Activated B cell treated with CpG ODN at 0.5 μM for 24 hours (primary cell): ENCODE measurements at regions of chr12 and their contacts with region 1.

Region 1: DNA sequence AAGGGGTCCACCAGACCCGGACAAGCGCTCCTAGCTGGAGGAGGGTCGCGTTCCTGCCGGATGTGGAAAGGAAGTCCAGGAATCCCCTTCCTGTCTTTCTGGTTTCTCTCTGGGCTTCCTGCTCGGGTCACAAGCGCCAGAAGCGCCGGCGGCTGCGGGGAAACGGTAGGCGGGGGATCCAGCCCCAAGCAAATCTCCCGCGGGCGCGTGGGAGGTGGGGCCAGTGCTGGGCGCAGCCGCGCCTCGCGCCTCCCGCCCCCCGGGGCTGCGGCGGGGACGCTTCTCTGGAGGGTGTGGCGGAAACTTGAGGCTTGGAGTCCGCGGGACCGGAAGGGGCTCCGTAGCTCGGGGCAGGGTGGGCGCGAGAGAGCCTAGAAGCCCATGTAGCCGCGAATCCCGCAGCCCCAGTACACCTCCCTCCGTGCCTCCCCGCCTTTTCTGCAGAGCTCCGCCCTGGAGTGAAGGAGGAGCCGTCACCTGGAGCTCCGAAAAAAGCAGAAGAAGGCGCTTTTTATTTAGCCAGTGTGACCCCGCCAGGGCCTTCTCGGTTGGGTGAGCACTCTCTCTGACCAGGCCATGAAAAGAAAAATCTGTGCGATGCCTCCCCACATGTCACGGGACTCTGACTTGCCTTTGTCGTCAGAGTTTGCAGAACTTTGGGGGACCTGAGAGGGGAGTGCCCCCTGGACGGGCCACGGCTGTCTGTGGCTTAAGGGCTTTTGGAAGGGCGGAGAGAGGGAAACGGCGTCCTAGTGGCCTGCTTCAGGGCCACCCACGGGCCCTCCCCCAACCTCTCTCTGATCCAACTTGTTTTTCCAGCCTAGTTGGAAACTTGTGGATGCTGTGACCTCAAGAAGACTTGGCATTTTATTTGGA is 21.4 kb upstream of the CLEC2D start:
- DNase-seq: peak; percentile 88
- ATAC-seq: peak; percentile 74
- H3K4me3 Mint-ChIP-seq: peak overlapping the region; percentile 89
- H3K27ac Mint-ChIP-seq: peak overlapping the region; percentile 98
- H3K4me1 Mint-ChIP-seq: peaks cover 68% of the 10 kb centered on the region
- H3K27me3 Mint-ChIP-seq: no peaks in the 10 kb centered on the region
- CTCF ChIP-seq: no peak

Region 2: GRCh38 chr12:9319044-9319841 is 328.8 kb before region 1 on chr12:
- CTCF ChIA-PET with region 1: no interaction called
- POLR2A ChIA-PET with region 1: no interaction called
- intact Hi-C with region 1: no loop called
- DNase-seq: no peak
- ATAC-seq: peak; percentile 49
- H3K4me3 Mint-ChIP-seq: peak overlapping the region; percentile 21
- H3K27ac Mint-ChIP-seq: peak overlapping the region; percentile 6
- H3K4me1 Mint-ChIP-seq: peaks cover 11% of the 10 kb centered on the region
- H3K27me3 Mint-ChIP-seq: no peaks in the 10 kb centered on the region
- CTCF ChIP-seq: no peak

Region 3: GRCh38 chr12:9404469-9405260 is 243.4 kb before region 1 on chr12:
- CTCF ChIA-PET with region 1: no interaction called
- POLR2A ChIA-PET with region 1: no interaction called
- intact Hi-C with region 1: no loop called
- DNase-seq: no peak
- ATAC-seq: no peak
- H3K4me3 Mint-ChIP-seq: no peak overlapping the region
- H3K27ac Mint-ChIP-seq: no peak overlapping the region
- H3K4me1 Mint-ChIP-seq: no peaks in the 10 kb centered on the region
- H3K27me3 Mint-ChIP-seq: no peaks in the 10 kb centered on the region
- CTCF ChIP-seq: no peak

Region 4: GRCh38 chr12:9634177-9634803 is 13.8 kb before region 1 on chr12:
- CTCF ChIA-PET with region 1: interaction called, 7 read pairs
- POLR2A ChIA-PET with region 1: interaction called, 98 read pairs
- intact Hi-C with region 1: loop called (anchors 1 kb)
- DNase-seq: no peak
- ATAC-seq: peak; percentile 80
- H3K4me3 Mint-ChIP-seq: peak overlapping the region; percentile 66
- H3K27ac Mint-ChIP-seq: peak overlapping the region; percentile 86
- H3K4me1 Mint-ChIP-seq: peaks cover 60% of the 10 kb centered on the region
- H3K27me3 Mint-ChIP-seq: no peaks in the 10 kb centered on the region
- CTCF ChIP-seq: peak; percentile 57

Region 5: DNA sequence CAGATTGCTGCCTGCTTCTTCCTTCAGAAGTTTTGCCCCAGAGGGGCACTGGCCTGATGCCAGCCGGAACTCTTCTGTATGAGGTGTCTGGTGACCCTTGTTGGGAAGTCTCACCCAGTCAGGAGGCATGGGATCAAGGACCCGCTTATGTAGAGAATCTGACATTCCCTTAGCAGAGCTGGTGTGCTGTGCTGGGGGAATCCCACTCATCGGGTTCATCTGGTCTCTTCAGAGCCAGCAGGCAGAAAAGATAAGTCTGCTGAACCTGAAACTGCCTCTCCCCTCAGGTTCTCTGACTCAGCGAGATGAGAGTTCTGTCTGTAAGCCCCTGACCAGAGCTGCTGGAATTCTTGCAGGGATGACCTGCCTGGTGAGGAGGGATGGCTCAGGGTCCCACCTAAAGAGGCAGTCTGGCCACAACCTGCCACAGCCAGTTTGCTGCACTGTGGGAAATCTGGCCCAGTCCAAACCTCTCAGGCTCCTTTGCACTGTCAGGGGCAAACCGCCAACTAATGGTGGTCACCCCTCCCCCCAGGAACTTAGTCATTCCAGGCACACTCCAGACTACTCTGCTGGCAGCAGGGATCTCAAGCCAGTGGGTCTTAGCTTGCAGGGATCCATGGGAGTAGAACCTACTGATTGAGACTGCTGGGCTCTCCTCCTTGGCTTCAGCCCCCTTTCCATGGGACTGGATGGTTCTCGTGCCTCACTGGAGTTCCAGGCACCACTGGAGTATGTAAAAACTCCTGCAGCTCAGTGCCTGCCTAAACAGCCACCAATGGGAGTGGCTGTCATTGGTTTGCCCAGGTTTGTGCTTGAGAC is 25.6 kb after region 1 on chr12:
- CTCF ChIA-PET with region 1: interaction called, 18 read pairs
- POLR2A ChIA-PET with region 1: interaction called, 833 read pairs
- intact Hi-C with region 1: loop called (anchors 1 kb)
- DNase-seq: no peak
- ATAC-seq: peak; percentile 29
- H3K4me3 Mint-ChIP-seq: peak overlapping the region; percentile 95
- H3K27ac Mint-ChIP-seq: peak overlapping the region; percentile 96
- H3K4me1 Mint-ChIP-seq: peaks cover 82% of the 10 kb centered on the region
- H3K27me3 Mint-ChIP-seq: no peaks in the 10 kb centered on the region
- CTCF ChIP-seq: no peak

Region 6: GRCh38 chr12:9702255-9702654 is 54.2 kb after region 1 on chr12:
- CTCF ChIA-PET with region 1: interaction called, 3 read pairs
- POLR2A ChIA-PET with region 1: interaction called, 29 read pairs
- intact Hi-C with region 1: loop called (anchors 1 kb)
- DNase-seq: no peak
- ATAC-seq: peak; percentile 41
- H3K4me3 Mint-ChIP-seq: peak overlapping the region; percentile 65
- H3K27ac Mint-ChIP-seq: peak overlapping the region; percentile 85
- H3K4me1 Mint-ChIP-seq: peaks cover 85% of the 10 kb centered on the region
- H3K27me3 Mint-ChIP-seq: no peaks in the 10 kb centered on the region
- CTCF ChIP-seq: no peak

Region 7: GRCh38 chr12:9721394-9722092 is 73.5 kb after region 1 on chr12:
- CTCF ChIA-PET with region 1: interaction called, 3 read pairs
- POLR2A ChIA-PET with region 1: interaction called, 59 read pairs
- intact Hi-C with region 1: loop called (anchors 1 kb)
- DNase-seq: no peak
- ATAC-seq: peak; percentile 85
- H3K4me3 Mint-ChIP-seq: peak overlapping the region; percentile 69
- H3K27ac Mint-ChIP-seq: peak overlapping the region; percentile 96
- H3K4me1 Mint-ChIP-seq: peaks cover 95% of the 10 kb centered on the region
- H3K27me3 Mint-ChIP-seq: no peaks in the 10 kb centered on the region
- CTCF ChIP-seq: no peak

Region 8: GRCh38 chr12:9732921-9733461 is 84.9 kb after region 1 on chr12 and contains the start of gene CLECL1:
- CTCF ChIA-PET with region 1: interaction called, 7 read pairs
- POLR2A ChIA-PET with region 1: interaction called, 104 read pairs
- intact Hi-C with region 1: loop called (anchors 1 kb)
- DNase-seq: no peak
- ATAC-seq: peak; percentile 49
- H3K4me3 Mint-ChIP-seq: peak within 1 kb of the TSS; percentile 88
- H3K27ac Mint-ChIP-seq: peak within 1 kb of the TSS; percentile 94
- H3K4me1 Mint-ChIP-seq: peaks cover 84% of the 10 kb centered on the region
- H3K27me3 Mint-ChIP-seq: no peaks in the 10 kb centered on the region
- CTCF ChIP-seq: no peak
- total RNA-seq, gene CLECL1: 111 and 115 TPM in 2 replicates

Region 9: DNA sequence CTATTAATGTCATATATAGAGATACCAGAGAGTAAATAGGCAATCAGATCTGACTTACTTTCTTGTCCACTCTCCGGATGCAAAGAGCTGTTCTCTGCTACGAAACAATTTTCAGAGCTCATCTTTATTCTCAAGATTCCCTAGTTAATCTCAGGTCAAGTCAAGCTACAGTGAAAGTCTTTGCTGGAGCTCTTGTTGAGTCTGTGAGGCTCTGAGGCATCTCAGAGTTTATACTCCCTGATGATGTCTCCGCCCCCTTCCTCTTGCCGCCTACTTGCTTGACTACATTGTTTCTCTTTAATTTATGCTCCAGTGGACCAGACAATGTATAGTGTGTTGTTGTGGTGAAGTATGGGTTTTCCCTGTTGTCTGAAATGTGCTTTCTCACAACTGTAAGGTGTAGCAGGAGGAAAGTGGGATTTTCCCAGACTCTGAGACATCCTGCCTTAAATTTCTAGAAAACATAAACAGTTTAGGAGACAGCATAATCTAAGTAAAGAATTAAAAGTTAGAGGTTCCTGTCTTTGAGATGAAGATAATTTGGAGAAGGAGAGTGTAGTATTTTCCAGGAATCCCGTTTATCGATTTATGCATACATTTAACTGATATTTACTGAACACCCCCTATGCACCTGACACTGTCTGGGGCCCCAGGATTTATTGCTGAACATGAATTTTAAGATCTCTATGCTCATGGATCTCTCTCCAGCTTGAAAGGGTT is 112.8 kb after region 1 on chr12 and contains the start of gene CD69:
- CTCF ChIA-PET with region 1: no interaction called
- POLR2A ChIA-PET with region 1: interaction called, 28 read pairs
- intact Hi-C with region 1: loop called (anchors 1 kb)
- DNase-seq: peak; percentile 33
- ATAC-seq: peak; percentile 54
- H3K4me3 Mint-ChIP-seq: peak within 1 kb of the TSS; percentile 90
- H3K27ac Mint-ChIP-seq: peak within 1 kb of the TSS; percentile 93
- H3K4me1 Mint-ChIP-seq: peaks cover 81% of the 10 kb centered on the region
- H3K27me3 Mint-ChIP-seq: no peaks in the 10 kb centered on the region
- CTCF ChIP-seq: no peak
- total RNA-seq, gene CD69: 23.7 and 26.7 TPM in 2 replicates